GM12878 (cell line): ENCODE measurements at regions of chr13 and their contacts with region 1.

Region 1: DNA sequence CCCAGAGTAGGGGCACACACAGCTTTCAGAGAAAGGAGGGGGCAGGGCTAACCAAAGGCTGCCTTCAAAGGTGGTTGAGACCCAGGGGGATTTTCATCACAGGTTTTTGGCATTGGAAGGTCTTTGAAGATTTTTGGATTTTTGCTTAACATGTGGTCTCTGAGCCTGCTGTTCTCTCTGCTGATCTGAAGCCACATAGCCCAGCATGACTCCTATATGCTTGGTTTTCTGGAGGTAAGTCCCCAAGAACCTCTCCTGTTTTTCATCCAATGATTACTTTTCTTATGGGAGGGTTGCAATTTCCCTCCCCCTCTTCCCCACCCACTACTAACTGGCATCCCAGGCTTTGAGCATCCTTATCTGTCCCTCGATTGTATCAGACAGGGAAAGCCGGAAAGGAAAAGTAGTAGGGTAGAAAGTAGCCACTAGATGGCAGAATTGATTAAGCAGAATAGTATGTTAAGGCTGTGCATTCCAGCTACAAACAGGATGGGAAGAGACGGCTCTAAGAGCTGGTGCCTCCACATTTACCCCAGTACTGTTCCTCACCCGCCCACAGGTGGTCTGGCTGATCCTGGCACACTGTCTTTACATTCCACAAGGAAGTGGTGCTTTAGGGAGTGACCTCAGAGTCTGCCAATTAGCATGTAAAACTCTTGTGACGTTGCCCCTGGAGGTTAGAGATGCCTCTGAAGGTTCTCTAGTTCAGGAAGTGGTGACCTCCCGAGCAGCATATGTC is 218.9 kb upstream of the EDNRB start:
- DNase-seq: peak; percentile 46
- ATAC-seq: peak; percentile 95
- H3K4me3 ChIP-seq: no peak overlapping the region
- H3K27ac ChIP-seq: no peak overlapping the region
- H3K4me1 ChIP-seq: no peaks in the 10 kb centered on the region
- H3K27me3 ChIP-seq: 0 out of 4 replicates have a peak, but pooled peaks cover 0 to under 1% of the 10 kb centered on the region in 2 experiments
- CTCF ChIP-seq: peak; percentile 67 to 74 (median 67)
- EP300 ChIP-seq: no peak
- POLR2A ChIP-seq: no peak
- RAD21 ChIP-seq: peak; percentile 82

Region 2: GRCh38 chr13:78161266-78161665 is 23.7 kb after region 1 on chr13:
- CTCF ChIA-PET with region 1: no interaction called
- POLR2A ChIA-PET with region 1: no interaction called
- RAD21 ChIA-PET with region 1: no interaction called
- SMC1A ChIA-PET with region 1: no interaction called
- in situ Hi-C with region 1: no loop called
- intact Hi-C with region 1: no loop called
- DNase-seq: no peak
- ATAC-seq: no peak
- H3K4me3 ChIP-seq: no peak overlapping the region
- H3K27ac ChIP-seq: no peak overlapping the region
- H3K4me1 ChIP-seq: no peaks in the 10 kb centered on the region
- H3K27me3 ChIP-seq: no peaks in the 10 kb centered on the region
- CTCF ChIP-seq: no peak
- EP300 ChIP-seq: no peak
- POLR2A ChIP-seq: no peak
- RAD21 ChIP-seq: no peak

Region 3: GRCh38 chr13:78194904-78195639 is 57.5 kb after region 1 on chr13:
- CTCF ChIA-PET with region 1: interaction called, 5 read pairs
- POLR2A ChIA-PET with region 1: no interaction called
- RAD21 ChIA-PET with region 1: interaction called, 14 read pairs
- SMC1A ChIA-PET with region 1: interaction called, 4 read pairs
- in situ Hi-C with region 1: no loop called
- intact Hi-C with region 1: no loop called
- DNase-seq: no peak
- ATAC-seq: peak; percentile 20
- H3K4me3 ChIP-seq: no peak overlapping the region
- H3K27ac ChIP-seq: no peak overlapping the region
- H3K4me1 ChIP-seq: no peaks in the 10 kb centered on the region
- H3K27me3 ChIP-seq: no peaks in the 10 kb centered on the region
- CTCF ChIP-seq: no peak
- EP300 ChIP-seq: no peak
- POLR2A ChIP-seq: no peak
- RAD21 ChIP-seq: no peak

Region 4: DNA sequence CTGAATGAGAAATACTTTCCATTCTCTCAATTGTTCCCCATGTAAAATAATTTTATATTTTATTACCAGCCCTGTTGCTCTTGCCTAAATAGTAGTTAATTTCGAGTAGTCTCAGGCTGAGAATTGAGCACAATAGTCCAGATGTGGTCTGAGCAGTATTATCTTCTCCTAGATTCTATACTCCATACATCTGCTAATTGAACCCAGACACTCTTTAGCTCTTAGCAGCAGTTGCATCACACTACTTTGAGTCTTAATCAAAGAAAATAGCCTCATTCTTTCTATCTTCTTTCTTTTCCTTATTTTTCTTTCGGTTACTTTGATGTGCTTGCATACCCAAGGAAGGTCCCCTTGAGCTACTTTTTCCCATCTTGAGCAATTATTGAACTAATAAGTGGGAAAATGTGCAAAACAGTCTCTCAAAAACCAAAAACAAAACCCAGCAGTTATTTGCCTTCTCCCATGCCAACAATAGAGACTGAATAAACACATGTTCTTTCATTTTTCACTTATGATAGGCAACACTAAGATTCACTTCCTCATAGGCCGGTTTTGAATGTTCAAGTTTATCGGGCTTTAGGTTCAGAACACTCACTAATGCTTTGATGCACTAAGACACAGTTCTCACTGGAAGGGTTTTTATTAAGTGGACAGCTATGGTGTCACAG is 261.3 kb after region 1 on chr13:
- CTCF ChIA-PET with region 1: interaction called, 3 read pairs
- POLR2A ChIA-PET with region 1: no interaction called
- RAD21 ChIA-PET with region 1: no interaction called
- SMC1A ChIA-PET with region 1: no interaction called
- in situ Hi-C with region 1: no loop called
- intact Hi-C with region 1: loop called (anchors 10 kb)
- DNase-seq: peak; percentile 53
- ATAC-seq: peak; percentile 96
- H3K4me3 ChIP-seq: no peak overlapping the region
- H3K27ac ChIP-seq: peak overlapping the region; percentile 55
- H3K4me1 ChIP-seq: peaks cover 21% of the 10 kb centered on the region
- H3K27me3 ChIP-seq: no peaks in the 10 kb centered on the region
- CTCF ChIP-seq: no peak
- EP300 ChIP-seq: no peak
- POLR2A ChIP-seq: no peak
- RAD21 ChIP-seq: no peak

Region 5: GRCh38 chr13:78589206-78589605 is 451.6 kb after region 1 on chr13:
- CTCF ChIA-PET with region 1: no interaction called
- POLR2A ChIA-PET with region 1: no interaction called
- RAD21 ChIA-PET with region 1: interaction called, 5 read pairs
- SMC1A ChIA-PET with region 1: interaction called, 5 read pairs
- in situ Hi-C with region 1: no loop called
- intact Hi-C with region 1: loop called (anchors 10 kb)
- DNase-seq: no peak
- ATAC-seq: peak; percentile 62; the same call in 2 of the 3 replicates
- H3K4me3 ChIP-seq: no peak overlapping the region
- H3K27ac ChIP-seq: no peak overlapping the region
- H3K4me1 ChIP-seq: no peaks in the 10 kb centered on the region
- H3K27me3 ChIP-seq: peaks cover 3 to 12% of the 10 kb centered on the region in 2 experiments
- CTCF ChIP-seq: no peak
- EP300 ChIP-seq: no peak
- POLR2A ChIP-seq: no peak
- RAD21 ChIP-seq: no peak

Region 6: DNA sequence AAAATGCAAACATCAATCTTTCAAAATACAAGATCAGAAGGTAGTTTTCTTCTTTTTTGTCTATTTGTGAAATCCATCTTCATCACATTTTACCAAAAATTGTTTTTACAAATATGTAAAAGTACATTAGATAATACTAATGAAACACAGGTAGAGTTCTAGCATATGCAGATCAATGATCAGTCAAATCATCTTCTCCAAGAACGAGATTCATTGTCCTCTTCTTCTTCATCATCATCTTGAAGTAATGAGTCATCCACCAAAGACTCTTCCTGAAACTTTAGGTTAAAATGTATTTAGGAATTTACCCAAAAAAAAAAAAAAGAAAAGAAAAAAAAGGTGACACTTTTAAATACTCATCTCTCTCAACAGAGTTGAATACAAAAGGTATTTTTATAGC is 1182.9 kb after region 1 on chr13:
- CTCF ChIA-PET with region 1: no interaction called
- POLR2A ChIA-PET with region 1: no interaction called
- RAD21 ChIA-PET with region 1: no interaction called
- SMC1A ChIA-PET with region 1: no interaction called
- in situ Hi-C with region 1: no loop called
- intact Hi-C with region 1: loop called (anchors 10 kb)
- DNase-seq: no peak
- ATAC-seq: no peak
- H3K4me3 ChIP-seq: no peak overlapping the region
- H3K27ac ChIP-seq: no peak overlapping the region
- H3K4me1 ChIP-seq: no peaks in the 10 kb centered on the region
- H3K27me3 ChIP-seq: no peaks in the 10 kb centered on the region
- CTCF ChIP-seq: no peak
- EP300 ChIP-seq: no peak
- POLR2A ChIP-seq: no peak
- RAD21 ChIP-seq: no peak